ENCODE measurements at regions of chr15 and their contacts with region 1.

Region 1: DNA sequence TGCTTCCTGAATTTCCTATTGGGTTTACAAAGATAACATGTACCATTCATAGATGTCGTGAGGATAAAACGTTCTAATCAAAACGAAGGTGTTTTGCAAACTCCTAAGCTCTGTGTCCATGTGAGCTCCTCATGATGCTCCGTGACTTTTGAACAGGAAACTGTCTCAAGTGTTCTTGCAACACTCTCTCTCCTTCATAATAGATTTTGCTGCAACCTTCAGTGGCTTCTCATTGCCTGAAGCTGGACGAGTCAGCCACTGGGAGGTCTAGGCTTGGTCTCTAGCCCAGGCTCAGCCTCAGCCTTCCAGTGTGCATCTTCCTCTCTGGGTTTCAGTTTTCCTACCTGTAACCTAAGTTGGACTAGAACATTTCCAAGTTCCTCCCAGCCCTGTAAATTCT is 18.7 kb upstream of the BCL2A1 start:
- DNase-seq: no peak
- ATAC-seq: peak; percentile 41 to 53; a peak in 4 of 6 replicates
- H3K4me3 ChIP-seq: no peak overlapping the region
- H3K27ac ChIP-seq: peak overlapping the region in 1 of 2 experiments; percentile 5; a peak in 1 of 6 replicates
- H3K4me1 ChIP-seq: peaks cover 3% of the 10 kb centered on the region; the same call in 2 of the 3 replicates
- CTCF ChIP-seq: no peak
- EP300 ChIP-seq: no peak
- POLR2A ChIP-seq: no peak
- RAD21 ChIP-seq: no peak

Region 2: DNA sequence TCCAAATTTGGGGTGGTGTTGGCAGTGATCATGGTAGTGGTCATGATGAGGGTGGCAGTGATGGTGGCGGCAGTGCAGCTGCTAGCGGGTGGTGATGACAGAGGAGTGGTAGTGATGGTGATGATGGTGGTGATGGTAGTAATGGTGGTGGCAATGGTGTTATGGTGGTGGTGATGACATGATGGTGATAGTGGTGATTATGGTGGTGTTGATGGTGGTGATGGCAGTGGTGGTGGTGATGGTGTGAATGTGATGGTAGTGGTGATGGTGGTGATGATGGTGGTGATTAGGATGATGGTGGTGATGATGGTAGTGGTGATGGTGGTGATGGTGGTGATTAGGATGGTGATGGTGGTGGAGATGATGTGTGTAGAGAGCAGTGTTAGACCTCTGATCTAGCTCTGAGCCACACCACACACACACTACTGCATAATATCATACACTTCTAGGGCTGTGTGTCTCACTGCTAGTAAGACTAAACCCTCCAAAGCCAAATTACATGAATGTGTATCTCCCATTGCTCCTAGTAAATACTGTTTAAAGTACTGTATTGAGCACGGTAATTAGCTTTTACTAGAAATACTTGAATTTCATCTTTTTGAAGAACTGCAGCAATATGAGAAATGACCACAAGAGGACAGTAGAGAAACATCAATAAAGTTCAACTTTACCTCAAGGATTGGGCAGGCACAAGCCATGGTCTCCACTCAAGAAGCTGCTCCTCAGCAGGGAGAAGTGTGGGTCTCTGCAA is 649.9 kb before region 1 on chr15:
- CTCF ChIA-PET with region 1: interaction called, 10 read pairs
- POLR2A ChIA-PET with region 1: no interaction called
- DNase-seq: peak; percentile 47 to 57
- ATAC-seq: peak; percentile 70 to 81
- H3K4me3 ChIP-seq: no peak overlapping the region
- H3K27ac ChIP-seq: no peak overlapping the region
- H3K4me1 ChIP-seq: no peaks in the 10 kb centered on the region
- CTCF ChIP-seq: peak; percentile 92
- EP300 ChIP-seq: no peak
- POLR2A ChIP-seq: no peak
- RAD21 ChIP-seq: peak; percentile 82 to 83

Region 3: GRCh38 chr15:79872358-79873017 is 117.2 kb before region 1 on chr15:
- CTCF ChIA-PET with region 1: interaction called, 14 read pairs
- POLR2A ChIA-PET with region 1: no interaction called
- DNase-seq: peak in 1 of 2 experiments; percentile 20
- ATAC-seq: no peak
- H3K4me3 ChIP-seq: no peak overlapping the region
- H3K27ac ChIP-seq: no peak overlapping the region
- H3K4me1 ChIP-seq: 0 out of 3 replicates have a peak, but pooled peaks cover 4% of the 10 kb centered on the region
- CTCF ChIP-seq: no peak
- EP300 ChIP-seq: no peak
- POLR2A ChIP-seq: no peak
- RAD21 ChIP-seq: no peak

Region 4: DNA sequence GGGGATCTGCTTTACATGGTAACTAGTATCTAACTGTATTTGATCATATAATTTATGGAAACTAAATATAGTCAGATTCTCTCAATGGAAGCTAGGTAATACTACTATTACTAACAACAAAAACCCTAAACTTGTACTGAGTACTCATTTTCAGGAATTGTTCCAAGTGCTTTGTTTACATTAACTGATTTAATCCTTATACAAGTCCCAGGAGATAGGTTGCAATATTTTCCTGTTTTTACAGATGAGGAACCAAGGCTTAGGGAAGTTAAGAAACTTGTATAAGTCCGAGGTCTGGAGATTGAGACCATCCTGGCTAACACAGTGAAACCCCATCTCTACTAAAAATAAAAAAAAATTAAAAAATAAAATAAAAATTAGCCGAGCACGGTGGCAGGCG is 85.4 kb before region 1 on chr15:
- CTCF ChIA-PET with region 1: interaction called, 55 read pairs
- POLR2A ChIA-PET with region 1: no interaction called
- DNase-seq: no peak
- ATAC-seq: no peak
- H3K4me3 ChIP-seq: no peak overlapping the region
- H3K27ac ChIP-seq: no peak overlapping the region
- H3K4me1 ChIP-seq: peaks cover 21% of the 10 kb centered on the region; the same call in 2 of the 3 replicates
- CTCF ChIP-seq: no peak
- EP300 ChIP-seq: no peak
- POLR2A ChIP-seq: no peak
- RAD21 ChIP-seq: no peak

Region 5: GRCh38 chr15:79970624-79971434 is 18.9 kb before region 1 on chr15 and contains the start of gene BCL2A1:
- CTCF ChIA-PET with region 1: interaction called, 10 read pairs
- POLR2A ChIA-PET with region 1: no interaction called
- DNase-seq: peak; percentile 58 to 87
- ATAC-seq: peak; percentile 71 to 80
- H3K4me3 ChIP-seq: peak within 1 kb of the TSS; percentile 38
- H3K27ac ChIP-seq: peak within 1 kb of the TSS; percentile 44 to 71
- H3K4me1 ChIP-seq: peaks cover 55% of the 10 kb centered on the region
- CTCF ChIP-seq: no peak
- EP300 ChIP-seq: peak in 1 of 2 experiments; percentile 56; a peak in 1 of 5 replicates
- POLR2A ChIP-seq: no peak
- RAD21 ChIP-seq: peak in 1 of 2 experiments; percentile 19; a peak in 1 of 5 replicates
- polyA plus RNA-seq, gene BCL2A1: 14.5 and 20.1 TPM in 2 replicates

Region 6: DNA sequence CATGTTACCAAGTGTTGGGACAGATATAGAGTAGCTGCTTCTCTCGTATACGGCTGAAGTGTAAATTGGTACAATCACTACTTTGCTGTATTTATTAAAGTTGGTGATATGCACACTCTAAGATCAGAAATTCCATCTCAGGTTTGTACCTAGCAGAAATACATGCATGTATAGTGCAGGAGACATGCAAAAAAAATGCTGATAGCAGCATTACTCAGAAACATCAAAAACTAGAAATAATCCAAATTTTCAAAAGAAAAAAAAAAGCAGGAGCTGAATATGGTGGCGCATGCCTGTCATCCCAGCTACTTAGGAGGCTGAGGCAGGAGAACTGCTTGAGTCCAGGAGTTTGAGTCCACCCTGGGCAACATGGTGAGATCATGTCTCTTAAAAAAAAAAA is 12.6 kb after region 1 on chr15:
- CTCF ChIA-PET with region 1: interaction called, 22 read pairs
- POLR2A ChIA-PET with region 1: no interaction called
- DNase-seq: no peak
- ATAC-seq: no peak
- H3K4me3 ChIP-seq: no peak overlapping the region
- H3K27ac ChIP-seq: no peak overlapping the region
- H3K4me1 ChIP-seq: no peaks in the 10 kb centered on the region
- CTCF ChIP-seq: no peak
- EP300 ChIP-seq: no peak
- POLR2A ChIP-seq: no peak
- RAD21 ChIP-seq: no peak

Region 7: GRCh38 chr15:80058851-80059785 is 69.4 kb after region 1 on chr15 and contains the start of gene ZFAND6:
- CTCF ChIA-PET with region 1: no interaction called
- POLR2A ChIA-PET with region 1: no interaction called
- DNase-seq: peak; percentile 94 to 96
- ATAC-seq: peak; percentile 92 to 96
- H3K4me3 ChIP-seq: peak within 1 kb of the TSS; percentile 80
- H3K27ac ChIP-seq: peak within 1 kb of the TSS; percentile 90 to 97
- H3K4me1 ChIP-seq: peaks cover 29% of the 10 kb centered on the region
- CTCF ChIP-seq: no peak; the same call in 2 of the 3 replicates
- EP300 ChIP-seq: no peak
- POLR2A ChIP-seq: peak; percentile 91
- RAD21 ChIP-seq: peak; percentile 26 to 41; a peak in 1 of 5 replicates
- polyA plus RNA-seq, gene ZFAND6: 271 and 307 TPM in 2 replicates

Region 8: DNA sequence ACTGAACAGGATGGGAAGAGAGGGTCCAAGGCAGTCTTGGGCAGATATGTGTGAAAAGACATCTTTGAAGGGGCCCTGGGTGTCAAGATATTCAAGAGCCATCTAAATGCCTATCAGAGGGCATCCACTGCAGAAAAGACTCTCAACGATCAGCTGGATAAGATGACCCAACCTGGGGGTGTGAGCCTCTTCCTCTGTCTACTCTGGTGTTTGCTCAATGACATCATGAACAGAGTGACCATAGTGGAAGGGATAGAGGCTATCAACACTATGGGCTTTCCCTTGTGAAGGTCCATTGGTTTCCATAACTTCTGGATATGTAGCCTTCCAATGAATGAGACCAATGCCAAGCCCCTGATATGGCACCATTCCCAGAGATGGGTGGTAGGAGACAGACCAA is 205.2 kb after region 1 on chr15:
- CTCF ChIA-PET with region 1: no interaction called
- POLR2A ChIA-PET with region 1: no interaction called
- DNase-seq: no peak
- ATAC-seq: no peak
- H3K4me3 ChIP-seq: no peak overlapping the region
- H3K27ac ChIP-seq: no peak overlapping the region
- H3K4me1 ChIP-seq: no peaks in the 10 kb centered on the region
- CTCF ChIP-seq: no peak
- EP300 ChIP-seq: no peak
- POLR2A ChIP-seq: no peak
- RAD21 ChIP-seq: no peak

Region 9: DNA sequence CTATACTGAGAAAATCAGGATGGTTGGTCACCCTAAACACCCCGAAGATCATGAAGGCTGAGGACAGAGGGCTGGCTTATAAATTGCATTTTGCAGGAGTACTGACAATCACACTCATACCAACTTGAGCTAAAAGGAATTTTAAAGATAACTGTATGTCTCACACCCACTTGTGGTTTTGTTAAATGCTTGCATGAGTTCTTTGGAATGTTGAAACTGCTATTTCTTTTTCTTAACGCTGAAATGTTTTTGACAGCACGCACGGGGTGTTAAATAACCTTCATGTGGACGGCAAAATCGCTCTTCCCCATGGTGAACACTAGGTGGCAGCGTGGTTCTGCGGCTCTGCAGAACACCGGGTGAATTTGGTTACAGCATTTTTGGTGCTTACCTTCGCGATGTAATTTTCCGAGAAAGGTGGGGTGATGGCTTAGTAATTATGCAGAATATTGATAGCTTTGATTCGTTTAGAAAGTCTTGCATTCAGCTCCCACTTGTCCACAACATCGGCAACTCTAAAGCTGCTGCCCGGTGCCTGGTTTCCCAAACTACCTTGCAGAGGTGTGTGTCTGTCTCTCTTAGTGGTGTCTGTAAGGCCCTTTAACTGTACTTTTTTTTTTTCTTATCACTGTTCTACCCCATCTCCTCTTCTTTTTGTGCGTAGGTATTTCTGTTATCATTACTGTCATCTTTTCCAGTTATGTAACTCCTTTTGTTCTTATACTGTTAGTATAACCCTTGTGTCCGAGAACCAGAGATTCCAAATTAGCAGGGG is 466.2 kb after region 1 on chr15:
- CTCF ChIA-PET with region 1: no interaction called
- POLR2A ChIA-PET with region 1: no interaction called
- DNase-seq: peak; percentile 78 to 83
- ATAC-seq: peak; percentile 79 to 92
- H3K4me3 ChIP-seq: no peak overlapping the region
- H3K27ac ChIP-seq: no peak overlapping the region
- H3K4me1 ChIP-seq: peaks cover 14% of the 10 kb centered on the region
- CTCF ChIP-seq: peak; percentile 99
- EP300 ChIP-seq: no peak
- POLR2A ChIP-seq: no peak
- RAD21 ChIP-seq: peak; percentile 98 to 99